ENCODE measurements at regions of chr1 and their contacts with region 1.

Region 1: DNA sequence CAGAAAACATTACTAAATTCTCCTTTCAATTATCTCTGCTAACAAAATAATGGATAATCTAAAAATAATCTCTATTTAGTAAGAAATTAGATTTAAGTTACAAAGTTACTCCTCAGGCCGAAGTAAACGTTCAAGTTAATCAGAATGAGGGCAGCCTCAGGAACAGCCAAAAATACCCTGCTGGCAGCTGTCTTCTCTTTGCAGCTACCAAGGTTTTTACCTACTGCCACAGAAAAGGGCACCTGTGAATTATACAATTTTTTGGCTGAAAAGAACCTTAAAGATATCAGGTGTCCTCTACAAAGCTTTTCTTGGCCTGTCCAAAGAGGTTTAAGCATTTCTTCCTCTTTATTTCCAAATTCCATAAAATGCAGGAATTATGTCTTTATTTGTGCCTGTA is 84.4 kb downstream of the AKT3 start:
- DNase-seq: no peak
- H3K4me3 ChIP-seq: no peak overlapping the region
- H3K4me3 Mint-ChIP-seq: no peak overlapping the region
- H3K27ac ChIP-seq: no peak overlapping the region
- H3K27ac Mint-ChIP-seq: peak overlapping the region in 1 of 7 donors; percentile 12
- H3K4me1 ChIP-seq: no peaks in the 10 kb centered on the region
- H3K4me1 Mint-ChIP-seq: peaks cover 34 to 62% (median 49%) of the 10 kb centered on the region in 4 donors
- H3K27me3 ChIP-seq: no peaks in the 10 kb centered on the region
- H3K27me3 Mint-ChIP-seq: no peaks in the 10 kb centered on the region

Region 2: DNA sequence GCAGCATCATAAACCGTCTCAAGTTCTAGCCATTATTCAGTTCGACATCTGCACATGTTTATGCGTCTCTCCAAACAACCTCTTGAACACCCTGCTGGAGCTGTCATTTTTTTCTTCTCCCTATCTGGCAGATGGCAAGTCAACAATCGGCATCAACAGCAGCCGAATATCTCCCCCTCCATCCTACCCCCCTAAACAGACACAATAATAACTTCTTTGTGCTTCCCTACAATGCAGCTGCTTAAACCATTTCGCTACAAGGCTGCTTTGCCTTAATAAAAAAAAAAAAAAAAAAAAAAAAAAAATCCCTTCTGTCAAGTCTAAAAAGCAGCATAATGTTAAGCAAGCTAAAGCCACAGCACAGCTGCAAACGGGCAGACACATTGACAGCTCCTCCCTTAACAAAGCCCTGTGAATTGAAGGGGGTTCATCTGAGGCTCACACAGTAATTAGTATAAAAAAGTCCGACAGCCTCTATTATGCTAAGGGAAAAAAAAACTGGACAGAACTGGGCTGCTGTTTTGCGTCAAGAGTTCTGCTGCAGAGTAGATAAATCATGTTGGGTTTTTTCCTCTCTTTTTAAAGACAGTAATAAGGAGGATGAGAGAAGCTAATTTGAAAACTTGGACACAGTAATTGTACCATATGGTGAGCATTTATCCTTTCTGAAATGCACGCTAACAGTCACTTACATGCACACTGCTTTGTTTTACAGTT is 52.0 kb before region 1 on chr1:
- CTCF ChIA-PET with region 1: no interaction called
- POLR2A ChIA-PET with region 1: no interaction called
- intact Hi-C with region 1: no loop called
- DNase-seq: no peak
- H3K4me3 ChIP-seq: no peak overlapping the region
- H3K4me3 Mint-ChIP-seq: no peak overlapping the region
- H3K27ac ChIP-seq: no peak overlapping the region
- H3K27ac Mint-ChIP-seq: no peak overlapping the region
- H3K4me1 ChIP-seq: peaks cover 7% of the 10 kb centered on the region
- H3K4me1 Mint-ChIP-seq: peaks cover 40 to 57% (median 48%) of the 10 kb centered on the region in 4 donors
- H3K27me3 ChIP-seq: no peaks in the 10 kb centered on the region
- H3K27me3 Mint-ChIP-seq: no peaks in the 10 kb centered on the region

Region 3: GRCh38 chr1:243748706-243749283 is 16.9 kb before region 1 on chr1:
- CTCF ChIA-PET with region 1: interaction called, 9 read pairs
- POLR2A ChIA-PET with region 1: interaction called, 3 read pairs
- intact Hi-C with region 1: loop called (anchors 2 kb)
- DNase-seq: peak in 4 of 5 donors; percentile 32 to 56 (median 44)
- H3K4me3 ChIP-seq: no peak overlapping the region
- H3K4me3 Mint-ChIP-seq: no peak overlapping the region
- H3K27ac ChIP-seq: no peak overlapping the region
- H3K27ac Mint-ChIP-seq: peak overlapping the region in 5 of 7 donors; percentile 14 to 75 (median 29)
- H3K4me1 ChIP-seq: peaks cover 5% of the 10 kb centered on the region
- H3K4me1 Mint-ChIP-seq: peaks cover 28 to 46% (median 36%) of the 10 kb centered on the region in 4 donors
- H3K27me3 ChIP-seq: no peaks in the 10 kb centered on the region
- H3K27me3 Mint-ChIP-seq: no peaks in the 10 kb centered on the region

Region 4: DNA sequence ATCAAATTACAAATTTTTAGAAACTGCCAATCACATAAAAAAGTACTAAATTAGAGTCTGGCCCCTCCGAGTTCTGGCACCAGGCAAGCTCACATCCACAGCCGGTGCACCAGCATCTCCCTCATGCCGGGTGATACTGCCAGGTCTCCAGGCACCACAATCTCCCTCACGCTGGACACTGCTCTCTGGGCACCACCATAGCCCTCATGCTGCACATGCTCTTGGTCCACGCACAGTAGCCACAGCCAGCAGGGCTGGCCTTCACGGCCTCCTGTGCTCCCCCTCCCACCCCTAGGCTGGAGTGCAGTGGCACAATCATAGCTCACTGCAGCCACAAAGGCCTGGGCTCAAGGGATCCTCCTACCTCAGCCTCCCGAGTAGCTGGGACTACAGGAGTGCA is 18.8 kb after region 1 on chr1:
- CTCF ChIA-PET with region 1: no interaction called
- POLR2A ChIA-PET with region 1: no interaction called
- intact Hi-C with region 1: no loop called
- DNase-seq: no peak
- H3K4me3 ChIP-seq: no peak overlapping the region
- H3K4me3 Mint-ChIP-seq: no peak overlapping the region
- H3K27ac ChIP-seq: no peak overlapping the region
- H3K27ac Mint-ChIP-seq: no peak overlapping the region
- H3K4me1 ChIP-seq: no peaks in the 10 kb centered on the region
- H3K4me1 Mint-ChIP-seq: peaks cover 26 to 58% (median 43%) of the 10 kb centered on the region in 4 donors
- H3K27me3 ChIP-seq: no peaks in the 10 kb centered on the region
- H3K27me3 Mint-ChIP-seq: no peaks in the 10 kb centered on the region

Region 5: DNA sequence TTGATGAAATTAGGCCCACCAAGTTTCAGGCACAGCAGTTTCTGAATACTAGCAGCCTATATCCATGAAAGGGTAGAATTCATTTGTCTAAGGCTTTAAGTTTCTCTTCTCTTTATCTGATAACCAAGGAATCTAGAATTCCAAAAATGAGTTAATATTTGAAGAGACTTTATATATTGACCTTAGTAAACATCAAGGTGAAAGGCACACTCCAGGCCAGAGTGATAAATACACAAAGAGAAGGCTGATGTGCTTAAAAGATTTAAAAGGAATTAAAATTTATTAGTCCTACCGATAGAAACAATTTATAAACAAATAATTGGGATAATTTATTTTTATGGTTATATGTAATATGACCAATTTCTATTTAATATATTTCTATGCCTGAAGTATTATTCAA is 793.9 kb after region 1 on chr1:
- CTCF ChIA-PET with region 1: no interaction called
- POLR2A ChIA-PET with region 1: no interaction called
- intact Hi-C with region 1: no loop called
- DNase-seq: no peak
- H3K4me3 ChIP-seq: no peak overlapping the region
- H3K4me3 Mint-ChIP-seq: no peak overlapping the region
- H3K27ac ChIP-seq: no peak overlapping the region
- H3K27ac Mint-ChIP-seq: no peak overlapping the region
- H3K4me1 ChIP-seq: no peaks in the 10 kb centered on the region
- H3K4me1 Mint-ChIP-seq: no peaks in the 10 kb centered on the region
- H3K27me3 ChIP-seq: no peaks in the 10 kb centered on the region
- H3K27me3 Mint-ChIP-seq: no peaks in the 10 kb centered on the region

Measured in CD4-positive, alpha-beta memory T cell (primary cell).